AG04449 (cell line): ENCODE measurements at regions of chr14 and their contacts with region 1.

Region 1: DNA sequence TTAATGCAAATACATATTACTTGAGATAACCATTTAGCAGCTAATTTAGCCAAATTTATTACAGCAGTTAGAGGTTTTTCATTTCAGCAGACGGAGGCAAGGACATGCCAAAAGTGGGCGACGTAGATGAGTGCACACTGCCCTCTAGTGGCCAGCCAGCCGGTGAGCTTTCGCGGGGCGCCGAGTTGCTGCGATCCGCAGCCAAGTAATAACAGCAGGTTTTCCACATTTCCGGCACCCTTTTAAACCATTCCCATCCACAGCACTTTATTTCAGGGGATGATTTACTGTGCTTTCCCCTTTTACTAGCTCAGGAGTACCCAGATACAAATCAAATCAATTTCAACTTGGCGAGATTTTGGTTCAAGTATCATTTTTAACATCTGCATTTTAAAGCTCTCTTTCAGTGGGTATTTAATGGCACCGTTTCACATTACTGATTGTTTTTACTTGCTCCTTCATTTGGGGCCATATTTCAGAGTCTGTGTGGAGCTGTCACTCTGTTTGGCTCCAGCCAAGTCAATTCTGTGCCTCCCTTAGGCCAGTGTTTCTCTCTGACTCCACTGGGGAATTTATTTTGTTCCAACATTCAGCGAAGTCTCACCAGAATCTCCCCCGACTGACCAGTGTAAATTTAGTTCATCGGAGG is 158.0 kb downstream of the EGLN3 start:
- DNase-seq: peak; percentile 19
- H3K4me3 ChIP-seq: no peak overlapping the region
- CTCF ChIP-seq: peak; percentile 93

Region 2: GRCh38 chr14:33475623-33476022 is 317.2 kb before region 1 on chr14:
- CTCF ChIA-PET with region 1: interaction called, 13 read pairs
- POLR2A ChIA-PET with region 1: no interaction called
- DNase-seq: no peak
- H3K4me3 ChIP-seq: no peak overlapping the region
- CTCF ChIP-seq: peak; percentile 13

Region 3: DNA sequence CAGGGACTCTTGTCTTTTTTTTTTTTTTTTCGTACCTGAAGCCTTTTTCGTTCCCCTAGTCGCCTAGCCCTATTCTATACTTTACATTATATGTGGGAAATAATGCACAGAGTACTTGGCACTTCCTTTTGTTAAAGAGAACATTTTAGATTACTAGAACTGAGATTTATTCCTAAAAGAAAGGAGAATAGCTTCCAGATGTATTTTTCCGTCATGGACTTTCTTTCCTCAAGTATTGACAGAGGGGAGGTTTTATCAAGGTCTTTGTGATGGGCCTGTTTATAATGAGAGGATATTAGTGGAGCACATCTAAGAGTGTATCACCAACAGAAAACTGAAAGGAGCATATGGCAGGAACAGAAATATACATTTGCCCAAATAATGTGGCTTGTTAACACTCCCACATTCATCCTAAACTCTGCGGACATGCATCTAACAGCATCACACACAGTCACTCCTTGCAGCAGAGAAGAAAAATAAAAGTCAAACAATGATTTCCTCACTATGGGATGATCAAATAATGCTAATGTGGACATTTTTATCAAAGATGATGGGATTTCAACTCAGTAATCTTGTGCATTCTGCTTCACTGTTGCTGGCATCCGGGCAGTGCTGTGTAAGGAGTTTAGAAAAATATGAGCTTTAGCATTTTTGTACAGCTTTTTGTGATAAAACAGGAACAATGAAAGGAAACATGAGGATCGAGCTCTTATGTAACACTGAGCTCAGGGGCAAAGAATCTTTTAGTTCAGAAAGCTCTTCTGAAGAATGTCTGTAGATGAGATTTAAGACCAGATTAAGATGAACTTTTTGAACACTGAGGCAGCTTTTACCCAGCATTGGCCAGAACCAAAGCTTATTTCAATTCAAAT is 25.0 kb before region 1 on chr14:
- CTCF ChIA-PET with region 1: interaction called, 17 read pairs
- POLR2A ChIA-PET with region 1: no interaction called
- DNase-seq: no peak
- H3K4me3 ChIP-seq: no peak overlapping the region
- CTCF ChIP-seq: no peak

Region 4: GRCh38 chr14:33781265-33781664 is 11.6 kb before region 1 on chr14:
- CTCF ChIA-PET with region 1: interaction called, 24 read pairs
- POLR2A ChIA-PET with region 1: no interaction called
- DNase-seq: no peak
- H3K4me3 ChIP-seq: no peak overlapping the region
- CTCF ChIP-seq: no peak

Region 5: GRCh38 chr14:33972583-33973081 is 179.8 kb after region 1 on chr14:
- CTCF ChIA-PET with region 1: no interaction called
- POLR2A ChIA-PET with region 1: no interaction called
- DNase-seq: no peak
- H3K4me3 ChIP-seq: no peak overlapping the region
- CTCF ChIP-seq: no peak